ENCODE measurements at regions of chr4 and their contacts with region 1.

Region 1: GRCh38 chr4:187283201-187283955 is 559.7 kb upstream of the FAT1 start:
- DNase-seq: no peak
- ATAC-seq: peak in 1 of 8 donors; percentile 39
- H3K4me3 ChIP-seq: no peak overlapping the region
- H3K27ac ChIP-seq: peak overlapping the region in 3 of 10 donors; percentile 4 to 57 (median 53)
- H3K4me1 ChIP-seq: peaks cover 0 to 6% (median 0%) of the 10 kb centered on the region in 9 donors
- H3K27me3 ChIP-seq: no peaks in the 10 kb centered on the region
- CTCF ChIP-seq: no peak

Region 2: GRCh38 chr4:187179086-187180058 is 104.0 kb before region 1 on chr4:
- intact Hi-C with region 1: loop called in 1 of 10 experiments (anchors 2 kb)
- DNase-seq: no peak
- ATAC-seq: peak in 2 of 8 donors; percentile 54 to 69
- H3K4me3 ChIP-seq: no peak overlapping the region
- H3K27ac ChIP-seq: peak overlapping the region in 6 of 10 donors; percentile 31 to 62 (median 43)
- H3K4me1 ChIP-seq: peaks cover 0 to 9% (median 0%) of the 10 kb centered on the region in 9 donors
- H3K27me3 ChIP-seq: no peaks in the 10 kb centered on the region
- CTCF ChIP-seq: no peak

Measured in heart right ventricle (tissue), 16 donors.